ENCODE measurements at regions of chr2 and their contacts with region 1.

Region 1: GRCh38 chr2:120252225-120253021 is at the start of gene RALB:
- DNase-seq: peak; percentile 87
- H3K4me3 ChIP-seq: peak within 1 kb of the TSS; percentile 82
- CTCF ChIP-seq: no peak

Region 2: GRCh38 chr2:120223034-120223912 is 29.1 kb before region 1 on chr2 and contains the start of gene TMEM185B:
- CTCF ChIA-PET with region 1: no interaction called
- POLR2A ChIA-PET with region 1: interaction called, 10 read pairs
- DNase-seq: no peak
- H3K4me3 ChIP-seq: peak within 1 kb of the TSS; percentile 71
- CTCF ChIP-seq: peak; percentile 28

Region 3: DNA sequence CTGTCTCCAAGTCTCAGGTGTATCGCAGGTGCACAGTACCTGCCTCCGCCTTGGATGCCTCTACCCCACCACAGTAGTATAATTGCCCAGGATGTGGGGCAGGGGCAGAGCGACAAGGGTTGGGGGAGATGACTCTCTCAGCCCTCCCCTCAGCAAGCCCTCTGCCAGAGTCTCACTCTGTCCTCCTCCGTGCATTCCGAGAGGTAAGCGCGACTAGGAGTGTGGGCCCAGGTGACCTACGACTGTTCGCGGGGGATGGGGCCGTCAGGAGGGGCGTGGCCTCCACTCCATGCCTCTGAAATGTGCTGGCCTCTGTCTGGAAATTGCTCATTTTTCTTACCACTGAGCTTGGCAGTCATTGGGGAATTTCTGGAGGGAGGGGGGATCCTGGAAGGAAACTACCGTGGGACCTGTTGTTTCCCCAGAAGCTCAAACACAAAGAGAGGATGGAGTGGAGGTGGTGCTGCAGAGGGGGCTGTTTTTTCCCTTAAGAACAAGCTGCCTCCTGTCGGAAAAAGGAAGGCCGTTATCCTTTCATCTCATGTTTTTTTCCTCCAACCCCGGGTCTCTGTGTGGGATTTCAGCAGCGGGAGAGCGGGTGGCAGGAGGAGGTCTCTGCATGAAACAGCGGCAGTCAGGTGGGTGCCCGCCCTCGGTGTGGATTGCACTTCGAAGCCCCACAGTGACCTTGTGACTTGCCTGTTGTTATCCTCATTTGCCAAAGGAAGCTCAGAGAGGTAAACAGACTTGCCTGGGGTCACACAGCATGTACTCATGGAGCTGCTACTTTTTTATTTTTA is 12.7 kb before region 1 on chr2:
- CTCF ChIA-PET with region 1: interaction called, 16 read pairs
- POLR2A ChIA-PET with region 1: interaction called, 13 read pairs
- DNase-seq: peak; percentile 36
- H3K4me3 ChIP-seq: no peak overlapping the region
- CTCF ChIP-seq: no peak

Region 4: GRCh38 chr2:120265006-120265405 is 12.6 kb after region 1 on chr2:
- CTCF ChIA-PET with region 1: interaction called, 11 read pairs
- POLR2A ChIA-PET with region 1: no interaction called
- DNase-seq: no peak
- H3K4me3 ChIP-seq: no peak overlapping the region
- CTCF ChIP-seq: no peak

Region 5: GRCh38 chr2:120390081-120391055 is 137.9 kb after region 1 on chr2:
- CTCF ChIA-PET with region 1: no interaction called
- POLR2A ChIA-PET with region 1: no interaction called
- DNase-seq: no peak
- H3K4me3 ChIP-seq: no peak overlapping the region
- CTCF ChIP-seq: no peak

Region 6: GRCh38 chr2:120589771-120590608 is 337.6 kb after region 1 on chr2:
- CTCF ChIA-PET with region 1: no interaction called
- POLR2A ChIA-PET with region 1: no interaction called
- DNase-seq: peak; percentile 91
- H3K4me3 ChIP-seq: no peak overlapping the region
- CTCF ChIP-seq: no peak

Region 7: GRCh38 chr2:120983344-120983743 is 730.9 kb after region 1 on chr2:
- CTCF ChIA-PET with region 1: no interaction called
- POLR2A ChIA-PET with region 1: no interaction called
- DNase-seq: no peak
- H3K4me3 ChIP-seq: no peak overlapping the region
- CTCF ChIP-seq: no peak

Measured in AG04449 (cell line).